Esophagus muscularis mucosa (tissue), 4 donors: ENCODE measurements at regions of chr18 and their contacts with region 1.

Region 1: GRCh38 chr18:6132751-6133368 is 237.5 kb upstream of the TMEM200C start:
- DNase-seq: no peak
- H3K4me3 ChIP-seq: no peak overlapping the region
- H3K27ac ChIP-seq: no peak overlapping the region
- H3K4me1 ChIP-seq: no peaks in the 10 kb centered on the region
- H3K27me3 ChIP-seq: no peaks in the 10 kb centered on the region
- CTCF ChIP-seq: no peak
- EP300 ChIP-seq: no peak
- POLR2A ChIP-seq: no peak

Region 2: GRCh38 chr18:6078877-6079276 is 54.0 kb before region 1 on chr18:
- intact Hi-C with region 1: loop called (anchors 10 kb)
- DNase-seq: no peak
- H3K4me3 ChIP-seq: no peak overlapping the region
- H3K27ac ChIP-seq: no peak overlapping the region
- H3K4me1 ChIP-seq: no peaks in the 10 kb centered on the region
- H3K27me3 ChIP-seq: no peaks in the 10 kb centered on the region
- CTCF ChIP-seq: no peak
- EP300 ChIP-seq: no peak
- POLR2A ChIP-seq: no peak